Esophagus squamous epithelium (tissue), 5 donors: ENCODE measurements at regions of chr18 and their contacts with region 1.

Region 1: DNA sequence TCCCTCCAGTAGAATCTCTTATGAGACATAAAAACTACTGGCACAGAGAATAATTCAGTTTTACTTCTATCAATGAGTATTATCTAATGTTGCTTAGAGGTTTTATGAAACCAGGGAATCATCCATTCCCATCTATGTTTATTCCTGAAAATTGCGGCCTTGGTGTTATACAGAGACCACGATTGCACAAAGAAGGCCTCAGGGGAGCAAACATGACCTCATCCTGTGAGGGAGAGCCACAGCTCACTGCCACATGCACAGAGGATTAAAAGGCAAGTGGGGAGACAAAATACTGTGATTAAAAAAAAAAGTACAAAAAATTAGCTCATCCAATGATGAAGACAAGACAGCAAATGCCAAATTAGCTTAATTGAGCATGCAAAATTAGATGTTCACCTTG is 111.8 kb upstream of the SLC35G4 start:
- DNase-seq: no peak
- H3K4me3 ChIP-seq: no peak overlapping the region
- H3K27ac ChIP-seq: no peak overlapping the region
- H3K4me1 ChIP-seq: peaks cover 0 to 7% (median 0%) of the 10 kb centered on the region in 3 donors
- H3K27me3 ChIP-seq: peaks cover 0 to 6% (median 0%) of the 10 kb centered on the region in 4 donors
- CTCF ChIP-seq: no peak
- POLR2A ChIP-seq: no peak

Region 2: DNA sequence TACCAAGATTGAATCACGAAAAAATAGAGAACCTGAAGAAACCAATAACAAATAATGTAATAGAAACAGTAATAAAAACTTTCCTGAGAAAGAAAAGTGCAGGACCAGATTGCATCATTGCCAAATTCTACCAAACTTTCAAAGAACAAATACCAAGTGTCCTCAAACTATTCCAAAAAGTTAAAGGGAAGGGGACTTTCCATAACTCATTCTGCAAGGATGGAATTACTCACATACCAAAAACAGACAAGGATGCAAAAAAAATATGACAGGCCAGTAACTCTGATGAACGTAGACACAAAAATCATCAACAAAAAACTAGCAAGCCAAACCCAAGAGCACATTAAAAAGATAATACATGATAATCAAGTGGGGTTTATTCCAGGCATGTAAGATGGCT is 60.5 kb before region 1 on chr18:
- intact Hi-C with region 1: loop called (anchors 10 kb)
- DNase-seq: no peak
- H3K4me3 ChIP-seq: no peak overlapping the region
- H3K27ac ChIP-seq: no peak overlapping the region
- H3K4me1 ChIP-seq: no peaks in the 10 kb centered on the region
- H3K27me3 ChIP-seq: no peaks in the 10 kb centered on the region
- CTCF ChIP-seq: no peak
- POLR2A ChIP-seq: no peak